Posterior vena cava (tissue), 2 donors: ENCODE measurements at regions of chr17 and their contacts with region 1.

Region 1: GRCh38 chr17:19513897-19514488 is 19.7 kb upstream of the SLC47A1 start:
- DNase-seq: no peak

Region 2: GRCh38 chr17:19648475-19649406 is 134.7 kb after region 1 on chr17 and contains the start of gene ALDH3A2:
- intact Hi-C with region 1: loop called in 1 of 2 experiments (anchors 5 kb)
- DNase-seq: peak; percentile 99
- total RNA-seq, gene ALDH3A2: 38.8 to 45.3 TPM